Gastrocnemius medialis (tissue), 4 donors: ENCODE measurements at regions of chr7 and their contacts with region 1.

Region 1: GRCh38 chr7:127585044-127585953 is at the start of gene GCC1:
- DNase-seq: peak; percentile 79 to 86
- ATAC-seq: peak; percentile 77 to 81
- H3K4me3 ChIP-seq: peak within 1 kb of the TSS; percentile 81 to 96 (median 90)
- H3K27ac ChIP-seq: peak within 1 kb of the TSS; percentile 87 to 99 (median 91)
- H3K4me1 ChIP-seq: peaks cover 61 to 66% of the 10 kb centered on the region in 2 donors
- H3K27me3 ChIP-seq: no peaks in the 10 kb centered on the region
- CTCF ChIP-seq: no peak
- POLR2A ChIP-seq: peak; percentile 81 to 86
- total RNA-seq, gene GCC1: 12.3 to 17.9 (median 15.4) TPM

Region 2: DNA sequence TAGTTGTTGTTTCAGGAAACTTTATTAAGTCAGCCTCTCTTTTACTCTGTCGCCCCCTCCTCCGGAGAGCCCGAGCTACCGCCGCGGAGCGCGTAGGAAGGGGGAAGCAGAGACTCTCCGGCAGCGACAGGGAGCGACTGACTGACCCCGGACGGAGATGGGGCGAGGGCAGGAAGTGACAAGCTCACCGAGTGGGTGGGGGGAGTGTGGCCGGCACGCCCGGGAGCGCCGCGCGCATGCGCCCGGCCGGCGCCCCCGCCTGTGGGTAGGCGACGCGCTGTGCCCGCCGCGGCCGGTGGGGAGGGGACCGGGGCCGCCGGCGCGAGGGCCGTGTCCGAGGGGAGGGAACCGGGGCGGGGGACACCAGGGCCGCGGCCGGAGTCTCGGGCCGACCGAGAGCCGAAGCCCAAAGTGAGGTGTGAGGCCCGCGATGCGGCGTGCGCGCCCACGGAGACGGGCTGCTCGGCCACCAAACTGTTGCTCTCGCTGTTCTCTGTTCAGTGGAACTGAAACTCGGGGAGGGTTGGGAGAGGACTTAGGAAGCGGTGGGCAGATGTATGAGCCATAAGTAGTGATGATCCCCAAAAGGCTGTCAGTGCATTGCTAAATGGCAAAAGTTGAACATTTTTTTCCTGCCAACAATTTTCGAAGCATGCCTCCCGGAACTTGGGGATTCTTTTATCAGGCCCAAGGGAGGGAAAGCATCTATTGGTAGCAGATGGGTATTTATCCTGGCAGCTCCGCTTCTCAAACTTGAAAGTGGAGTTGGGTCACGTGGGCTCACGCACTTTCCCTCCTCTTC is 192.5 kb before region 1 on chr7 and contains the start of gene ZNF800:
- in situ Hi-C with region 1: loop called in 1 of 4 experiments (anchors 25 kb)
- intact Hi-C with region 1: loop called (anchors 1 kb)
- DNase-seq: peak; percentile 88 to 90
- ATAC-seq: peak; percentile 95 to 96
- H3K4me3 ChIP-seq: peak within 1 kb of the TSS; percentile 85 to 97 (median 90)
- H3K27ac ChIP-seq: peak within 1 kb of the TSS; percentile 89 to 97 (median 94)
- H3K4me1 ChIP-seq: peaks cover 19 to 25% of the 10 kb centered on the region in 2 donors
- H3K27me3 ChIP-seq: no peaks in the 10 kb centered on the region
- CTCF ChIP-seq: peak in 1 of 5 experiments; percentile 13
- POLR2A ChIP-seq: peak; percentile 92 to 93
- total RNA-seq, gene ZNF800: 22.1 to 41.3 (median 30.1) TPM

Region 3: GRCh38 chr7:127651556-127652332 is 66.4 kb after region 1 on chr7 and contains the start of gene SND1:
- in situ Hi-C with region 1: loop called in 2 of 4 experiments (anchors 5 to 10 kb)
- intact Hi-C with region 1: loop called (anchors 1 kb)
- DNase-seq: peak; percentile 98 to 100
- ATAC-seq: peak; percentile 98
- H3K4me3 ChIP-seq: peak within 1 kb of the TSS; percentile 78 to 90 (median 90)
- H3K27ac ChIP-seq: peak within 1 kb of the TSS; percentile 92 to 99 (median 93)
- H3K4me1 ChIP-seq: peaks cover 23 to 29% of the 10 kb centered on the region in 2 donors
- H3K27me3 ChIP-seq: no peaks in the 10 kb centered on the region
- CTCF ChIP-seq: peak in 2 of 5 experiments; percentile 7 to 10
- POLR2A ChIP-seq: peak; percentile 82 to 87
- total RNA-seq, gene SND1: 30.4 to 73.0 (median 50.3) TPM

Region 4: GRCh38 chr7:127782654-127783559 is 197.6 kb after region 1 on chr7:
- in situ Hi-C with region 1: no loop called
- intact Hi-C with region 1: no loop called
- DNase-seq: no peak
- ATAC-seq: no peak
- H3K4me3 ChIP-seq: no peak overlapping the region
- H3K27ac ChIP-seq: no peak overlapping the region
- H3K4me1 ChIP-seq: peaks cover 11 to 15% of the 10 kb centered on the region in 2 donors
- H3K27me3 ChIP-seq: no peaks in the 10 kb centered on the region
- CTCF ChIP-seq: no peak
- POLR2A ChIP-seq: no peak

Region 5: DNA sequence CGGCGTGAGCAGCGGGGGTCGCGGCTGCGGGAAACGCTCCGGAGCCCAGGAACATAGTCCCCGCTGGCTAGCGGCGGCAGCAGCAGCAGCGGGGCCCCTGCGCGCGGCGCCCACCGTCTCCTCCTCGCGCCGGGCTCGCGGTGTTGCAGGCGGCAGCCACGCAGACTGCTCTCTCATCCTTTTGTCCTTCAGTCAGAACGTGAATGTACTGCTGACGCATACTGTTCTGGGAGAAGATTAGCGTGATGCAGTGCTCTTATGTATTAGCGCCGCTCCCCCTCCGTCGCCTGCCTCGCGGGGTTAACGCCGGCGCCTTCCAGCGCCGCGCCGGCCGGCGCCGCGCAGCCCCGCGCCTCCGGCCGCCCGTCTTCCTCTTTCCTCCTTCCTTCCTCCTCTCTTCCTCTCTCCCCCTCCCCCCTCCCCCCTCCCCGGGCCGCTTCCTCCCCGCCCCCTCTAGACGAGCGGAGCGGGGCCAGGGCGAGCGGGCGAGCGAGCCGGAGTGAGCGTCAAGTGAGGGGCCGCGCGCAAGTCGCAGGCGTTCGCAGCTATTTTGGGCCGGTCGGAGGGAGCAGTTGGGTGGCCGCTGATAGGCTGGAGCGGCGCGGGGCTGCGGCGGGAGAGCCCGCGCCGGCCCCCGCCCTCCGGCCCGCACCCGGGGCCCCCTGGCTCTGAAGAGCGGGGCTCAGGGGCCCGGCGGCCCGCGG is 446.8 kb after region 1 on chr7:
- in situ Hi-C with region 1: no loop called
- intact Hi-C with region 1: loop called (anchors 5 kb)
- DNase-seq: peak in 1 of 2 donors; percentile 25
- ATAC-seq: peak; percentile 80 to 90
- H3K4me3 ChIP-seq: peak overlapping the region; percentile 45 to 70 (median 56)
- H3K27ac ChIP-seq: no peak overlapping the region
- H3K4me1 ChIP-seq: peaks cover 3 to 8% of the 10 kb centered on the region in 2 donors
- H3K27me3 ChIP-seq: peaks cover 0 to 3% (median 0%) of the 10 kb centered on the region in 3 donors
- CTCF ChIP-seq: peak in 2 of 5 experiments; percentile 13 to 30
- POLR2A ChIP-seq: peak; percentile 22 to 23

Region 6: DNA sequence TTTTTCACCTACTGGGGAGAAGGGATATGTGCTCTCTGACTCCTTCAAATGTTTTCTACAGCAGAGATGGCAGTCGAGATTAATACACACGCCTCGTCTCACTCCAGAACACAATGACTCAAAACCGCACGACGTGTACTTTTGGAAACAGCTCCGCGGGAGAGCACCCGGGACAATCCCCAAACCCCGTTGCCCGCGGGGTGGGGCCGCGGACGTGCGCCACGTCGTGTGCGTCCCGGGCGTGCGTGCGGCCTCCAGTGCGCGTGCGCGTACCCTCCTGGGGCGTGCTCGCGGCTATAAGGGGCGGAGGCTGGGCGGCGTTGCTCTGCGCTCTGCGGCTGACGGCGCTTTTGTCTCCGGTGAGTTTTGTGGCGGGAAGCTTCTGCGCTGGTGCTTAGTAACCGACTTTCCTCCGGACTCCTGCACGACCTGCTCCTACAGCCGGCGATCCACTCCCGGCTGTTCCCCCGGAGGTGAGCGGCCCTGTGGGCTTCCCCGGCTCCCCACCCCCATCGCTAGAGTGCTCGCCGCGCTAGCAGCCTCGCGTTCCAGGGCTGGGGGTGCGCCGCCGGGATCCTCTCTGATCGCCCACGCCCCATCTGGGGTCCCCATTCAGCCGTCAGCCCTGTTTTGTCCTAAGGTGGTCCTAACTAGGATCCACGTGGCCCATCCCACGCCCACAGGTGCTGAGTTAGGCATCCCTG is 870.4 kb after region 1 on chr7 and contains the start of gene HILPDA:
- in situ Hi-C with region 1: no loop called
- intact Hi-C with region 1: loop called (anchors 10 kb)
- DNase-seq: peak; percentile 83 to 92
- ATAC-seq: peak; percentile 84 to 92
- H3K4me3 ChIP-seq: peak within 1 kb of the TSS; percentile 71 to 89 (median 84)
- H3K27ac ChIP-seq: peak within 1 kb of the TSS; percentile 83 to 92 (median 88)
- H3K4me1 ChIP-seq: peaks cover 20 to 22% of the 10 kb centered on the region in 2 donors
- H3K27me3 ChIP-seq: no peaks in the 10 kb centered on the region
- CTCF ChIP-seq: no peak
- POLR2A ChIP-seq: peak; percentile 66 to 80
- total RNA-seq, gene HILPDA: 1.1 to 4.3 (median 3.2) TPM

Region 7: GRCh38 chr7:128904381-128905197 is 1319.3 kb after region 1 on chr7:
- in situ Hi-C with region 1: no loop called
- intact Hi-C with region 1: no loop called
- DNase-seq: no peak
- ATAC-seq: peak in 1 of 2 donors; percentile 57
- H3K4me3 ChIP-seq: no peak overlapping the region
- H3K27ac ChIP-seq: no peak overlapping the region
- H3K4me1 ChIP-seq: no peaks in the 10 kb centered on the region
- H3K27me3 ChIP-seq: peaks cover 2 to 9% (median 5%) of the 10 kb centered on the region in 3 donors
- CTCF ChIP-seq: peak; percentile 19 to 69 (median 58)
- POLR2A ChIP-seq: no peak